ENCODE measurements at regions of chr16 and their contacts with region 1.

Region 1: DNA sequence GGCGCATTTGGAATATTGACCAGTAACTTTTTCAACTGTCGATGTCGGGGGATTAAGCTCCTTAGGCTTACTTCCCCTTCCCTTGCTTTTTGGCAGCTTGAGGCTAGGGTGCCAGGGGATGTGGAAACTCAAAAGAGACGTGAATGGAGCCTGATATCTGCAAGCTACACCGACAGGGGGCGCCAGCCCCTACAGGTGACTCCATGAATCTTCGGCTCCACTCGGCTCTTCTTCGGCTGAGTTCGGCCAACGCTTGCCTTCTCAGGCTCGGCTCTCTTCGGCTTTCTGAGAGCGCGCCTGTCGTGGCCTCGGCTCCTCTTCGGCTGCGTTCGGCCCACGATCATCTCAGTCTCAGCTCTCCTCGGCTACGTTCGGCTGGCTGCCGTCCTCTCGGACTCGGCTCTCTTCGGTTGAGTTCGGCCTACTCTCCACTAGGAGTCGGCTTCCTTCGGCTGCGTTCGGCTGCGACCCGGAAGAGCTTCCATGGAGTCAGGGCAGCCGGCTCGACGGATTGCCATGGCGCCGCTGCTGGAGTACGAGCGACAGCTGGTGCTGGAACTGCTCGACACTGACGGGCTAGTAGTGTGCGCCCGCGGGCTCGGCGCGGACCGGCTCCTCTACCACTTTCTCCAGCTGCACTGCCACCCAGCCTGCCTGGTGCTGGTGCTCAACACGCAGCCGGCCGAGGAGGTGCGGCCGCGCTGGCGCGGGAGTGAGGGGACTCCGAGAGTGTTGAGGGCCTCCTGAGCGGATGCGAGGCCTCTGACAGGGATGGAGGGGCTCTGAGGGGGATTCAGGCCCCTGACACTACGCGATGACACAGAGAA is at the start of gene ERCC4:
- DNase-seq: peak; percentile 99
- ATAC-seq: peak; percentile 99
- H3K4me3 ChIP-seq: peak within 1 kb of the TSS; percentile 93
- H3K27ac ChIP-seq: peak within 1 kb of the TSS; percentile 88
- H3K4me1 ChIP-seq: peaks cover 7% of the 10 kb centered on the region
- H3K27me3 ChIP-seq: no peaks in the 10 kb centered on the region
- CTCF ChIP-seq: peak; percentile 88
- total RNA-seq, gene ERCC4: 9.6 TPM

Region 2: DNA sequence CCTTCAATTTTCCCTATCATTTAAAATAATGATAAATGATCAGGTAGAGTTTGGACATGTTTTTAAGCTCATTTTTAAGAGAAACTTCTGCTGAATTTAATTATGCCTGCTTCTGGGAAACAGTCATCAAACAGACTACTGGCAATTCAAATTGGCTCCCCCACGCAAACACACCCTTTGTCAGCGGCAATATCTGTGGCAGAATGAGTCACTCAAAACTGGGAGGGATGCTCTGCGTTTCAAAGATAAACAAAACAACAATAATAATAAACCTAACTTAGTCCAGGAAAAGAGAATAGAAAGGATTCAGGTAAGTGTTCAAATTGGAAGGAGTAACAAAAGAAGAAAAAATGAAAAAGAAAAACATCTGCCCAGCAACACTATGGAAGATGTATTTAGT is 108.1 kb before region 1 on chr16:
- intact Hi-C with region 1: no loop called
- DNase-seq: no peak
- ATAC-seq: no peak
- H3K4me3 ChIP-seq: no peak overlapping the region
- H3K27ac ChIP-seq: no peak overlapping the region
- H3K4me1 ChIP-seq: no peaks in the 10 kb centered on the region
- H3K27me3 ChIP-seq: no peaks in the 10 kb centered on the region
- CTCF ChIP-seq: no peak

Region 3: DNA sequence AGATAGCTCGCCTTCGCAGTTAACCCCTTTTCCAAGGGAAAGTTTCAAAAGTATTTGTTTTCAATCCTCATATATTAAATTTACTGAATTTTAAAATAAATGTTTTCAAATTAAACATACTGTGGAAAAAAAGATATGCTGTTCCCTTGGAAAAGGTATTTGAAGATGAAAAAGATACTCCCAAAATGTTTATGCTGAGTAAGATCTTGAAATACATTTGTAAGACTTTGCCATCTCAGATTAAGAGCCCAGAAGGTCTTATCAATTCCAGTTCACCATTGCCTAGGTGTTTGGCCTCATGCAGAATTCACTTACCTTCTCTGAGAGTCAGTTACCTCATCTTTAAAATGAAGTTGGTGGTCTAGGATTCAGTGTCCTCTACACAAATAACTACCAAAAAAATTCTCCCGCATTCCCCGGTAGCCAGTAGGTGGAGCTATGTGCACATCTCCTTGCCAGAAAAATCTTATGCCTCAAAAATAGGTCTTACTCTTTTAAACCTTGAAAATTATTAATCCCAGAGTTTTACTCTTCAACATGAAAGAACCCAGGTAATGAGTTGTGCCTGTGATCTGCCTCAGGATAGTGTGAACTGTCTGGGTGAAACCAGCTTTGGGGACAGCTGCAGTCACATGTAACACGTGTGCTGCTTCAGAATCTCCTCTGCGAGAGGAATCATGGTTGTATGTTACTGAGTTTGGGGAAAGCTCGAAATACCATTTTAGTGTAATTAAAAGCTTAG is 329.6 kb after region 1 on chr16:
- intact Hi-C with region 1: loop called (anchors 10 kb)
- DNase-seq: no peak
- ATAC-seq: peak; percentile 66
- H3K4me3 ChIP-seq: no peak overlapping the region
- H3K27ac ChIP-seq: no peak overlapping the region
- H3K4me1 ChIP-seq: no peaks in the 10 kb centered on the region
- H3K27me3 ChIP-seq: no peaks in the 10 kb centered on the region
- CTCF ChIP-seq: peak; percentile 82

Region 4: GRCh38 chr16:14529010-14529669 is 609.2 kb after region 1 on chr16:
- intact Hi-C with region 1: loop called (anchors 10 kb)
- DNase-seq: peak; percentile 69
- ATAC-seq: peak; percentile 92
- H3K4me3 ChIP-seq: no peak overlapping the region
- H3K27ac ChIP-seq: no peak overlapping the region
- H3K4me1 ChIP-seq: peaks cover 20% of the 10 kb centered on the region
- H3K27me3 ChIP-seq: no peaks in the 10 kb centered on the region
- CTCF ChIP-seq: peak; percentile 74